ENCODE measurements at regions of chr14 and their contacts with region 1.

Region 1: GRCh38 chr14:21103710-21104447 is 3.0 kb downstream of the TMEM253 start:
- DNase-seq: peak; percentile 87 to 98
- H3K4me3 ChIP-seq: peak overlapping the region; percentile 67 to 73
- H3K27ac ChIP-seq: peak overlapping the region; percentile 97
- H3K4me1 ChIP-seq: peaks cover 3 to 22% of the 10 kb centered on the region in 2 donors
- H3K27me3 ChIP-seq: no peaks in the 10 kb centered on the region
- CTCF ChIP-seq: peak in 2 of 3 experiments; percentile 81 to 88

Region 2: DNA sequence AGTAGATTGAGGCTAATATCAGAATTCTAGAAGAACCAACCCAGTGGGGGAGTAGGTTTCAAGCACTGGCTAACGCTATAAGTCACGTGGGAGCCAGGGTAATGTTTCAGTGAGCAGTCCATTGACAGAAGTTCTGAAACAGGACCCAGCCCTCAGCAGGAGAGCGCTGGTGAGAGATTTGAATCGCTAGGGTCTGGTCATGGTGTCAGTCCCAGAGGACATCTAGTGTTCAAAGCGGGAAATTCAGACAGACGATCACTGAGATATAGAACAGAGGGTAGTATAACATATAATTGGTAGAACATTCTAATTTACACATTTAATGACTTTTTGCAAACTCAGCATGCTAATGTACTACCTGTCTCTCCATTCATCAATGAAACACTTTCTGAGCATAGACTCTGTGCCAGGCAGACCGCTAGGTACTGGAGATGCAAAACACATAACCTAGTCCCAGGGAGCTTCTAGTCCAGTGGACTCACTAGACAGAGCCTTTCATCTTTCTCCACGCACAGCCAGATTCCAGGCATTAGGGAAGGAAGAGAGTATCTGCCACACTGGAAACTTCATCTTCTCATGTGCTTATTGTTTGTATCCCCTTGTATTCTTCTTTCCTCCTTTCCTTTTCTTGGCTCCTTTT is 248.1 kb before region 1 on chr14:
- intact Hi-C with region 1: loop called (anchors 5 kb)
- DNase-seq: peak in 1 of 2 donors; percentile 70
- H3K4me3 ChIP-seq: no peak overlapping the region
- H3K27ac ChIP-seq: no peak overlapping the region
- H3K4me1 ChIP-seq: no peaks in the 10 kb centered on the region
- H3K27me3 ChIP-seq: no peaks in the 10 kb centered on the region
- CTCF ChIP-seq: peak; percentile 31 to 55 (median 52)

Region 3: DNA sequence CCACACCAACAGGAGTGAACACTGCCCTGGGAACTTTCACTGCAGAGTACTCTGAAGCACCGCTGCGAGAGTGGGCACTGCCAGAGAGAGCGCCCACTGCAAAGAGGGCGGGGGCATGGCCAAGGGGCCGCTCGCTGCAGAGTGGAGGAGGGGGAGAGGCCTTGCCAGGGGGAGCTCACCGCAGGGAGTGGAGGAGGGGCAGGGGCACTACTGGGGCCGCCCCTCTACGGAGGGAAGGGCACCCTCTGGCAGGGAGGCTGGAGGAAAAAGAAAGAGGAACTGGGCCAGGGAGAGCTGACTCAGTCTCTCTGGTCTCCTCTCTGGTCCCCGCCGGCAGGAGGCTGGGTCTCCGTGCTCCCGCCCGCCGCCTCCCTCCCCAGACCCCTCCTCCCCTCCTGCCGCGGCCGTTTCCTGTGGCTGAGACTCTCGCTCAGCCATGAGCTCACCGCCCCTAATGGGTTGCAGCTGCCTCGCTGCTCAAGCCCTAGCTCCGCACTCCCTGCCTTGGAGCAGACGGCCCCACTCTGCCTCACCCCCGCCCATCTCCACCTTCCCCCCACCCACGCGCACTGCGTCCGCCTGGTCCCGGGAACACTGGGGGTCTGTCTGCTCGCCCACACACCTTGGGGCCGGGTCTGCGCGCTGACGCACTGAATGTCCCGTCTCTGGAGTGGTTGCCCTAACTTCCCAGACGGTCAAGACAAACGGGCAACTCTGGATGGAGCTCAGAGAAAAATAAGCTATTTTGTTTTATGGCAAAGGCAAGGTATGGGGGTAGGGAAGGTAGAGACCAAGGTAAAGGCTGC is 32.5 kb before region 1 on chr14:
- intact Hi-C with region 1: loop called (anchors 1 kb)
- DNase-seq: peak; percentile 72 to 95
- H3K4me3 ChIP-seq: peak overlapping the region; percentile 68 to 83
- H3K27ac ChIP-seq: peak overlapping the region; percentile 95 to 96
- H3K4me1 ChIP-seq: peaks cover 11 to 25% of the 10 kb centered on the region in 2 donors
- H3K27me3 ChIP-seq: no peaks in the 10 kb centered on the region
- CTCF ChIP-seq: no peak

Region 4: GRCh38 chr14:21092273-21093011 is 11.4 kb before region 1 on chr14:
- intact Hi-C with region 1: loop called (anchors 1 kb)
- DNase-seq: peak in 1 of 2 donors; percentile 86
- H3K4me3 ChIP-seq: no peak overlapping the region
- H3K27ac ChIP-seq: peak overlapping the region in 1 of 2 donors; percentile 36
- H3K4me1 ChIP-seq: peaks cover 0 to 8% of the 10 kb centered on the region in 2 donors
- H3K27me3 ChIP-seq: no peaks in the 10 kb centered on the region
- CTCF ChIP-seq: peak; percentile 100

Region 5: DNA sequence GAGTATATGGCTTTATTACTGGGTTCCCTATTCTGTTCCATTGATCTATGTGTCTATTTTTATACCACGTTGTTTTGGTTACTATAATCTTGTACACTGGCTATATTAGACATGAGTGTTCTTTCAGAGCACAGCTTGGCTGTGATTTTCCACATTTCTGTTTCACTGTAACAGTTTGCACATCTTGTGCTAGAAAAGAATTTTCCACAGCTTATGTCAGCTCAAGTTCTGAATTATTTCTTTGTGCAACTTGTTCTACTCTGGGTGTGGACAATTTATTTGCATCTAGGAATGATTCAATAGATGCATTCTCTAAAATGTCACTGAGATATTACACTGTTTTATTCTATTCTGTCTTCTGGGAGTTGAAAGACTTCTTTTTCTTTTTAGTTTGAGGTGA is 80.4 kb after region 1 on chr14:
- intact Hi-C with region 1: no loop called
- DNase-seq: no peak
- H3K4me3 ChIP-seq: no peak overlapping the region
- H3K27ac ChIP-seq: no peak overlapping the region
- H3K4me1 ChIP-seq: no peaks in the 10 kb centered on the region
- H3K27me3 ChIP-seq: no peaks in the 10 kb centered on the region
- CTCF ChIP-seq: no peak

Region 6: DNA sequence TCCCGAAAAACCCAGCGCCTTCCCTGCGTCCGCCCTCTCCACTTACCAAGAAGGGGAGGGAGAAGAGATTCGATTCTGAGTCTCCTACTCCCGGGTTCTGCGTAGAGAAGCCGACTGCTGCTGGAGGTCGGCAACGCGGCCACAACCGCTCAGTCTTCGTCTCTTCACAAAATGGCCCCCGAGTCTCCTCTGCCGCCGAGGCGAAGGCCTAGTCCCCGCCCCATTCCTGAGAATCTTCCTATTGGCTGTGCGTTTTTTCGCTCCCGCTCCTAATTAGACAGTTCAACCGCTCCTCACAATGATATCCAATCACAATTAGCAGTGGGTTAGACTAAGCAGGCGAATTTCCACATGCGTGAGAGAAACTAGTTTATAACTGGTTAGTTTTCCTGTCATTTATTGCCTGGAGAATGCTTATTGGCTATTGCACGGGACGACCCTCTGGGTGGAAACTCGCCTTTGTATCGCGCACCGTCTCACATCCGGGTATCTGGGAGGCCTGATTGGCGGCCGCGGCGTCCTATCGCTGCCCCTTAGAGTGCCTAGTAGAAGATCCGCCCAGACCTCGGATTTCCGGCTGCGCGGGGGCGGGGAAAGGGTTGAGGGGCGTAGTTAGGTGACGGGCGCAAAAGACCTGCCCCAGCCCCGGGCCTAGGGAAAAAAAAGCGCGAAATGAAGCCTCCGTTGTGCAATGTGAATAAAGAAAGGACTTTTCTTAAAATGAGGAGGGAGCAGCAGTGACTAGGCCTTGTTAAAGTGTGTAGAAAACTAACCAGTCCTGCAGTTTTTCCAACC is 165.6 kb after region 1 on chr14 and contains the start of gene HNRNPC:
- intact Hi-C with region 1: loop called (anchors 2 kb)
- DNase-seq: peak; percentile 100
- H3K4me3 ChIP-seq: peak within 1 kb of the TSS; percentile 67 to 95
- H3K27ac ChIP-seq: peak within 1 kb of the TSS; percentile 96 to 98
- H3K4me1 ChIP-seq: peaks cover 13% of the 10 kb centered on the region in 2 donors
- H3K27me3 ChIP-seq: no peaks in the 10 kb centered on the region
- CTCF ChIP-seq: no peak
- total RNA-seq, gene HNRNPC: 303 TPM

Region 7: DNA sequence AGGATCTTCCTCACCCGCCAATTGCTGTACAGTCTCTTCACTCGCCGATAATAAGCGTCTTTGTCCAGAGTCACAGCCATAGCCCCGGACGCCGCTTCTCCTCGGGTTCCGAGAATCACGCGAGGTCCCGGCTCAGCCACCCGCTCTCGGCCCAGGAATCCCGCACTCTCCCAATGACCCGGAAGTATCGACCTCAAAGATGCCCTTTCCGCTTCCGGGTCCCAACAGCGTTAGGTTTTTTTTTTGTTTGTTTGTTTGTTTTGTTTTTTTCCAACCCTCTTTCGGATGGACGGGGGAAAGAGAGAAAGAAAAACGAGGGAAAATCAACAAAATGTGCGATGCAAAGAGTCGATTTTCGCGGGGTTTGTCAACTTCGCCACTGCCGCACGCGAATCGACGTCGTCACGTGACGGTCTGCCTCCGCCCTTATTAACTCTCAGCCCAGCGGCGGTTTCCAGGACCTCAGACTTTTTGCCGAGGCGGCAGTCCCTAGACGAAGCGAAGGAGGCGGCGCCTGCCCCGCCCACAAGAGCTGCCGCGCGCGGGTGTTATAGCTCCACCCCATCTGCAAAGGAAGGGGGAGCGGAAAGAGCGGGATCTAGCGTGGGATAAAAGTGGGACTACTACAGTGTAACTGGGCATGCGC is 280.1 kb after region 1 on chr14 and contains the start of gene SUPT16H:
- intact Hi-C with region 1: loop called (anchors 10 kb)
- DNase-seq: peak; percentile 89 to 98
- H3K4me3 ChIP-seq: peak within 1 kb of the TSS; percentile 63 to 79
- H3K27ac ChIP-seq: peak within 1 kb of the TSS; percentile 88 to 90
- H3K4me1 ChIP-seq: peaks cover 0 to 16% of the 10 kb centered on the region in 2 donors
- H3K27me3 ChIP-seq: no peaks in the 10 kb centered on the region
- CTCF ChIP-seq: no peak
- total RNA-seq, gene SUPT16H: 13.5 TPM